ENCODE measurements at regions of chr7 and their contacts with region 1.

Region 1: DNA sequence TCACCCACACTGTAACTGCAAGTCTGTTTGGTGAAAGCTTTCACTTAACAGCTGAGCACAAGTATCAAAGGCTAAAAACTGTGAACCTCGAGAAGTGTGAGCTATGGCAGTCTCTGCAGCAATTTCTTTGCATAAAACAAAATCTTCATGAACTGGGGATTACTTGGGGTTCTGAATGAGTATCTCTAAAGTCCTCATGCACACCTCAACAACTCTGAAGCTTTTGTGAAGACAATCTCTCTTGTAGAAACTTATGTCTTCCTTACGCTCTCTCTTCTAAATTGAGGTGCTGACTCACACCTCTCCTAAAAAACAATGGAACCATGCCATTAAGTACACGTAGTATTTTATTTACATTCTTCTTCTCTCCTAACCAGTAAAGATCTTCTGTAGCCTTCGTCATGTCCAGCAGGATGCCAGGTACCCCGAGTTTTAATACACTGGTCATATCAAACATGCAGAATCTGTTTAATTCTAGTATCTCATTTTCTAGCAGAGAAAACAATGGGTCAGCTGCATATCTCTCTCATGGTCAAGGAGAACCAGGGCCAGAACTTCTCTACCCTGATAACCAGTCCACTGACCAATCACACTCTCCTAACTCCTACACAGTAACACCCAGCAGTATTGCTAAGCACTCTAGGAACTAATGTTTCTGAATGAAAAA is 76.9 kb downstream of the UBE2H start:
- DNase-seq: no peak
- CTCF ChIP-seq: no peak

Region 2: GRCh38 chr7:129848436-129848835 is 27.4 kb before region 1 on chr7:
- CTCF ChIA-PET with region 1: no interaction called
- POLR2A ChIA-PET with region 1: no interaction called
- DNase-seq: no peak
- CTCF ChIP-seq: no peak

Region 3: DNA sequence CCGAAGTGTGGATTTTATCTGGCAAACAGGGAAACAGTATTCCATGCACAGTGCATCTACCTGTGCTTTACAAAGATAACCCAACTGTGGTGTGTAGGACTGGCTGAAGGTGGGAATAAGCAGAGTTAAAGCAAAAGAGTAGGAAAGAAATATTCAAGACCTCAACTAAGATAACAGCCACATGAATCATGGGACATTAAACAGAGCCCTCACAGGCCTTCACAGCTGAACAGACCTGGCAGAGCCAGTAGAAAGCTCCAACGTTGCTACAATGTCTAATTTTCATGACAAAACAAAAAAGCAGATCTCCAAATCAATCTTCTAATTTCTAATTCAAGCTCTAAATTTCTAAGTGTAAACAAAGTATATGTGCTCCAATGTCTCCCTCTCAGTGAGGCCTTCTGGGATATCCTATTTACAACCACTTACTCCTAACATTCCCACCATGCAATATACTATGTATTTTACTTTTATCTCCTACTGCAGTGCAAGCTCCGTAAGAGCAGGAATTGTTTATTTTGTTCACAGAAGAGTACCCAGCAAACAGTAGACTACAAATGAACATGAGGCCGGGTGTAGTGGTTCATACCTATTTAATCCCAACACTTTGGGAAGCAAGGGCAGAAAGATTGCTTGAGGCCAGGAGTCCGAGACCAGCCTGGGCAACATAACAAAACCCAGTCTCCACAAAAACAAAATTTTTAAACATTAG is 13.4 kb after region 1 on chr7:
- CTCF ChIA-PET with region 1: interaction called, 10 read pairs
- POLR2A ChIA-PET with region 1: no interaction called
- DNase-seq: no peak
- CTCF ChIP-seq: no peak